GM12878 (cell line): ENCODE measurements at regions of chr5 and their contacts with region 1.

Region 1: GRCh38 chr5:149828161-149828884 is 98.2 kb downstream of the PPARGC1B start:
- DNase-seq: peak; percentile 79
- ATAC-seq: peak; percentile 84
- H3K4me3 ChIP-seq: no peak overlapping the region
- H3K27ac ChIP-seq: no peak overlapping the region
- H3K4me1 ChIP-seq: peaks cover 8% of the 10 kb centered on the region
- H3K27me3 ChIP-seq: no peaks in the 10 kb centered on the region
- CTCF ChIP-seq: peak; percentile 78 to 89 (median 83)
- EP300 ChIP-seq: no peak
- POLR2A ChIP-seq: no peak
- RAD21 ChIP-seq: peak; percentile 95

Region 2: DNA sequence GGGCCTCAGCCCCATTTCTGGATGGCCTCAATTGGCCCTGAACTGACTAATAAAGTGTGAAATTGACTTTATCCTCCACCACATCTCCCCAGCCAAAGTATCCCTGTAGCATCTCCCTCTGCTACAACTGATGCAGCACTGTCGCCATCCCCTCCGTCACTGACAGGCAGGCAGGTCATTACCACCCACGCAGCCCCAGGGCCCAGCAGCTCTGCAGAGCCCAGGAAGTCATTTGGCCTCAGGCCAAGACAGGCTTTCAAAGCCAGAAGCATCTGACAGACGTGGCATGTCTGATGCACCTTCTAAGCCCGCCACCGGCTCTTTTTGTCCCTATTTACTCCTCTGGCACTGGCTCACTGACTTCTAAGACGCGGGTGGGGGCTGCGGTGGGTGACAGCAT is 181.8 kb before region 1 on chr5:
- CTCF ChIA-PET with region 1: interaction called, 165 read pairs
- POLR2A ChIA-PET with region 1: interaction called, 3 read pairs
- RAD21 ChIA-PET with region 1: interaction called, 148 read pairs
- SMC1A ChIA-PET with region 1: interaction called, 38 read pairs
- in situ Hi-C with region 1: no loop called
- intact Hi-C with region 1: no loop called
- DNase-seq: no peak
- ATAC-seq: no peak
- H3K4me3 ChIP-seq: no peak overlapping the region
- H3K27ac ChIP-seq: no peak overlapping the region
- H3K4me1 ChIP-seq: no peaks in the 10 kb centered on the region
- H3K27me3 ChIP-seq: no peaks in the 10 kb centered on the region
- CTCF ChIP-seq: no peak
- EP300 ChIP-seq: no peak
- POLR2A ChIP-seq: no peak
- RAD21 ChIP-seq: no peak

Region 3: DNA sequence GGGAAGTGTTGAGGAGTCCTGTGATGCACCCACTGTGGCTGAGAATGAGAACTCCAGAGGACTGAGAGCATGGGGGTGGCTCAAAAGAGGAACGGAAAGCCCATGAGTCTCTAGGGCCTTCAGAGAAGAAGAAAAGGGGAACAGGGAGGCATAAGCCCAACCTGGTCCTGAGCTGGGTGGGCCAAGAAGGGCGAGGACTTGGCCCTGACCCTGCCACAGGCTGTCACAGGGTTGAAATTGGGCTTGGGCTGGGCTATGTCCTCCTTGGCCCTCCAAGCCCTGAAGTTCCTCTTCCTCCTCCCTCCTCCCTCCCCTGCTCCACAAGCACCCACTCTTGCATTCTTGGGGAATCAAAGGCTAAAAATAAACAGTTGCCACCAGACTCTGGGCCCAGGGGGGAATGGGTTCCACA is 147.5 kb before region 1 on chr5:
- CTCF ChIA-PET with region 1: interaction called, 29 read pairs
- POLR2A ChIA-PET with region 1: no interaction called
- RAD21 ChIA-PET with region 1: interaction called, 4 read pairs
- SMC1A ChIA-PET with region 1: interaction called, 5 read pairs
- in situ Hi-C with region 1: no loop called
- intact Hi-C with region 1: no loop called
- DNase-seq: peak; percentile 84
- ATAC-seq: peak; percentile 99
- H3K4me3 ChIP-seq: no peak overlapping the region
- H3K27ac ChIP-seq: peak overlapping the region; percentile 45
- H3K4me1 ChIP-seq: peaks cover 28% of the 10 kb centered on the region
- H3K27me3 ChIP-seq: peaks cover 0 to under 1% of the 10 kb centered on the region in 2 experiments; a peak in 1 of 4 replicates
- CTCF ChIP-seq: no peak
- EP300 ChIP-seq: peak; percentile 32 to 90; a peak in 3 of 4 replicates
- POLR2A ChIP-seq: no peak
- RAD21 ChIP-seq: no peak

Region 4: GRCh38 chr5:149775785-149776184 is 52.5 kb before region 1 on chr5:
- CTCF ChIA-PET with region 1: interaction called, 130 read pairs
- POLR2A ChIA-PET with region 1: interaction called, 11 read pairs
- RAD21 ChIA-PET with region 1: interaction called, 70 read pairs
- SMC1A ChIA-PET with region 1: interaction called, 88 read pairs
- in situ Hi-C with region 1: no loop called
- intact Hi-C with region 1: loop called (anchors 1 kb)
- DNase-seq: peak; percentile 23
- ATAC-seq: peak; percentile 72
- H3K4me3 ChIP-seq: no peak overlapping the region
- H3K27ac ChIP-seq: peak overlapping the region; percentile 67
- H3K4me1 ChIP-seq: peaks cover 55% of the 10 kb centered on the region
- H3K27me3 ChIP-seq: no peaks in the 10 kb centered on the region
- CTCF ChIP-seq: peak; percentile 62 to 72 (median 63)
- EP300 ChIP-seq: no peak
- POLR2A ChIP-seq: no peak
- RAD21 ChIP-seq: peak; percentile 51

Region 5: GRCh38 chr5:149799119-149799623 is 29.2 kb before region 1 on chr5:
- CTCF ChIA-PET with region 1: interaction called, 11 read pairs
- POLR2A ChIA-PET with region 1: interaction called, 70 read pairs
- RAD21 ChIA-PET with region 1: interaction called, 139 read pairs
- SMC1A ChIA-PET with region 1: interaction called, 49 read pairs
- in situ Hi-C with region 1: no loop called
- intact Hi-C with region 1: no loop called
- DNase-seq: no peak
- ATAC-seq: no peak
- H3K4me3 ChIP-seq: no peak overlapping the region
- H3K27ac ChIP-seq: peak overlapping the region; percentile 18; the same call in 1 of the 2 replicates
- H3K4me1 ChIP-seq: peaks cover 31% of the 10 kb centered on the region
- H3K27me3 ChIP-seq: no peaks in the 10 kb centered on the region
- CTCF ChIP-seq: no peak
- EP300 ChIP-seq: no peak
- POLR2A ChIP-seq: no peak
- RAD21 ChIP-seq: no peak

Region 6: GRCh38 chr5:149809931-149810617 is 18.2 kb before region 1 on chr5:
- CTCF ChIA-PET with region 1: interaction called, 55 read pairs
- POLR2A ChIA-PET with region 1: interaction called, 70 read pairs
- RAD21 ChIA-PET with region 1: interaction called, 139 read pairs
- SMC1A ChIA-PET with region 1: interaction called, 67 read pairs
- in situ Hi-C with region 1: no loop called
- intact Hi-C with region 1: loop called (anchors 1 kb)
- DNase-seq: no peak
- ATAC-seq: no peak
- H3K4me3 ChIP-seq: no peak overlapping the region
- H3K27ac ChIP-seq: peak overlapping the region; percentile 55
- H3K4me1 ChIP-seq: peaks cover 43% of the 10 kb centered on the region
- H3K27me3 ChIP-seq: no peaks in the 10 kb centered on the region
- CTCF ChIP-seq: no peak
- EP300 ChIP-seq: no peak
- POLR2A ChIP-seq: no peak
- RAD21 ChIP-seq: no peak

Region 7: DNA sequence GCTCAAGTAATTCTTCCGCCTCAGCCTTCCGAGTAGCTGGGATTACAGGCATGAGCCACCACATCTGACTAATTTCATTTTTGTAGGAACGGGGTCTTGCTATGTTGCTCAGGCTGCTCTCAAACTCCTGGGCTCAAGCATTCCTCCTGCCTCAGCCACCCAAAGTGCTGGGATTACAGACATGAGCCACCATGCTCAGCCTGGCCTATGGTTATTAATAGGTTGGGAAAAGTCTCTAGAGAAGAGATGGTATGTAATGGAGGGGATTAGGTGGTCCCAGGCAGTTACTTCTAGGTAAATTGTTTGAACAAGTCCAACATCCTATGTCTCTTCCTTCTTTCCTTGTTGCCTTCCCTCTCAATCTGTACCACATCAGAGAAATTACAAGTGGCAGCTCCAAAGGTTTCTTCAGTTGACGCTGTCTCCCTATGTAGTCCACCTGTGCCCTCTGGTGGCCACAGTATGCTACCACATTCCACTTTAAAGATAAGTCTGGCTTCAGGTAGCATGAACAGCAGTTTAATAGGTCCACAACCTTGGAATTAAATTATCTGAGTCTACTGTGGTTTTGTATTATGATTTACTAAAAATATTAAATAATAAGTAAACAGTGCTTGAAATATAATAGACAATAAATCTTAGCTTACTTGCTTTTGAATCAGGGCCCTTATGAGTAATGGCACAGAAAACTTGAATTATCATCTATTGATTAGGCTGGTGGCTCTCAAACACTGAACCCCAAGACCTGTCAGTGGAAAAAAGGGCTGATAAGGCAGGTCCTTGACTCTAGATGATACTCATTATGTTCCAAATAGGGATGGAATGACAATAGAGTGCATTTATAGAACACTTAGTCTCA is 162.4 kb after region 1 on chr5:
- CTCF ChIA-PET with region 1: interaction called, 110 read pairs
- POLR2A ChIA-PET with region 1: no interaction called
- RAD21 ChIA-PET with region 1: interaction called, 24 read pairs
- SMC1A ChIA-PET with region 1: interaction called, 45 read pairs
- in situ Hi-C with region 1: no loop called
- intact Hi-C with region 1: no loop called
- DNase-seq: peak; percentile 26
- ATAC-seq: peak; percentile 95
- H3K4me3 ChIP-seq: no peak overlapping the region
- H3K27ac ChIP-seq: no peak overlapping the region
- H3K4me1 ChIP-seq: no peaks in the 10 kb centered on the region
- H3K27me3 ChIP-seq: no peaks in the 10 kb centered on the region
- CTCF ChIP-seq: peak; percentile 86 to 96 (median 92); a peak in 5 of 6 replicates
- EP300 ChIP-seq: no peak
- POLR2A ChIP-seq: no peak
- RAD21 ChIP-seq: peak; percentile 99